ENCODE measurements at regions of chr15 and their contacts with region 1.

Region 1: GRCh38 chr15:45790325-45790943 is 155.6 kb downstream of the SQOR start:
- DNase-seq: peak; percentile 43
- ATAC-seq: no peak
- H3K4me3 Mint-ChIP-seq: no peak overlapping the region
- H3K27ac Mint-ChIP-seq: no peak overlapping the region
- H3K4me1 Mint-ChIP-seq: no peaks in the 10 kb centered on the region
- H3K27me3 Mint-ChIP-seq: peaks cover 7% of the 10 kb centered on the region

Region 2: DNA sequence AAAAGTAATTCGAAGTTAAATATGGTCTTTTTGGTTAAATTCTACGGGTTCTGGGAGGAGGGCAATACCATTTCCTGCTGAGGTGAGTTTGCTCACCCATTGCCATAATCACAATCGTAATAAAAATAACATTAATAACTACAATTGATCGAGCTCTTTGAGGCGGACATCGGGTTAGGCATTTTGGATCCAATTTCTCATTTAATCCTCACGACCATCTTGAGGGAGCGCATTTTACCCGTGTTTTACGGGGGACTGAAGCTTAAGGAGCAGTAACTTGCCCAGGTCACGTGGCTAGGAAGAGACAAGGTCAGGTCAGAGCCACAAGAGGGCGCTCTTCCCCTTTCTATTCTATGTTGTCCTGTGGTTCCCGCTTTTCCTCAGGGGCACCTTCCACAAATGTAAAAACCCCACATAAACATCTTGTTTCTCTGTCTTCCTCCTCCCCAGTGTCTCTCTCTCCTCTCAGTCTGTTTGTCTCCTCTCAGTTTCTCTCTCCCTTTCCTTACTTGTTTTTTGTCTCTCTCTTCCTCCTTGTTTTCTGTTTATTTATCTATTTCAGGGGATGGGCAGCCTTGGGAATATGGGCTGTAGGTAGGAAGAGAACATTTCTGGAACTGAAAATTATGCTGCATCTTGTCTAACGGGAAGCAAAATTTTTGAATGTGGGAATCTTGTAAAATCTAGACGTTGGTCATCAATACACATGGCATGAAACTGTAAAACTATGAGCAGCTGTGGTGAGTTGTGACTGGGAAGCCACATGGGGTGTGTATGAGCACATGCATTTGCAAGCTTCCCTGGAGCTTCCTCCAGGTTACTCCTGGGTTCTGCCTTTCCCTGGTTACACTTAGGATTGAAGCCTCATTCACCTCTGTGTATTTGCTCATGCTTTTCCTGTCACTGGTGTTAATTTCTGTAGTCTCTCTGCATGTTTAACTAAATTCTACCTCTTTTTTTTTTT is 84.6 kb before region 1 on chr15:
- CTCF ChIA-PET with region 1: interaction called, 12 read pairs
- DNase-seq: peak; percentile 77
- ATAC-seq: peak; percentile 84
- H3K4me3 Mint-ChIP-seq: peak overlapping the region; percentile 79
- H3K27ac Mint-ChIP-seq: no peak overlapping the region
- H3K4me1 Mint-ChIP-seq: peaks cover 13% of the 10 kb centered on the region
- H3K27me3 Mint-ChIP-seq: peaks cover 13% of the 10 kb centered on the region

Region 3: GRCh38 chr15:45751629-45752028 is 38.8 kb before region 1 on chr15:
- CTCF ChIA-PET with region 1: no interaction called
- DNase-seq: no peak
- ATAC-seq: no peak
- H3K4me3 Mint-ChIP-seq: no peak overlapping the region
- H3K27ac Mint-ChIP-seq: no peak overlapping the region
- H3K4me1 Mint-ChIP-seq: no peaks in the 10 kb centered on the region
- H3K27me3 Mint-ChIP-seq: peaks cover 24% of the 10 kb centered on the region

Region 4: DNA sequence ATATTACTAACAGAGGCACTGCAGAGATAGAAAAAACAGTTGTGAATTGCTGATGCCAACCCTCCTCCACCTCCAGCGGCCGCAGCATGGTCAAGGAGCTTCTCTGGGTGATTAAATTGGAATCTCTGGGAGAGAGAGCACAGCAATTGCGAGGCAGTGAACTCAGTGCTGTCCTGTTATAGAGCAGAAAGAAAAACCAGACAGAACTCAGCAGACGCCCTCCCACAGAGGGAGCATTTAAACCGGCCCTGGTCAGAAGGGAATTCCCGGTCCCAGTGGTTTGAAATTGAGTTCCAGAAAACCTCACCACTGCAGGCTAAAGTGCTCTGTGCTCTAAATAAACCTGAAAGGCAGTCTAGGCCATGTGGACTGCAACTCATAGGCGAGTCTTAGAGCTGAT is 19.8 kb after region 1 on chr15:
- CTCF ChIA-PET with region 1: no interaction called
- DNase-seq: no peak
- ATAC-seq: no peak
- H3K4me3 Mint-ChIP-seq: no peak overlapping the region
- H3K27ac Mint-ChIP-seq: no peak overlapping the region
- H3K4me1 Mint-ChIP-seq: no peaks in the 10 kb centered on the region
- H3K27me3 Mint-ChIP-seq: no peaks in the 10 kb centered on the region